H1 (cell line): ENCODE measurements at regions of chr2 and their contacts with region 1.

Region 1: DNA sequence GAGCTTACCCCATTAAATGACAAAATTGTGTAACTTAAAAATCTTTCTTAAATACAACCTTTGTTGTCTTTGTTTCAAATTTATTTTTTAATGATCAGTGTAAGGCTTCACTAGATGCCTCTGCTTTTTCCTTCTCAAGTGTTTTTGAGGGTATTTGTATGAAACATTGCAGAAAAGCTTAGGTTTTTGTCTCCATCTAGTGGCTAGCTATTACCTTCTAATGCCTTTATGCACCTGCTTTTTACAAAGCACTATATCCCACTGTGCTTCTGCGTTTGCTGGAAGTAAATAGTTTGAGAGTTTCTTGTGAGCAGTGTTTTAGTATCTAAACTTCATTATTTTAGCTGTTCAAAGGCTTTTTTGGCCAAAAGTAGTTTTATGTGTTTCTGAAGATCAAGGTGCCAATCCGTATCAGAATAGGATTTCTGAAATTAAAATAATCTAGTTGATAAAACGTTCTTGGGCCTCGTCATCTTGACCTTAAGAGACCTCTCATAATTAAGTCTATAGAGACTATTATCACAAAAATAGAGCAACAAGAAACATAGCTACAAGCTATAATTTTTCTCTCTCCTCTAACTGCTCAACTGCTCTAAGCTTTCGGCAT is 47.0 kb downstream of the IWS1 start:
- DNase-seq: no peak
- H3K4me3 ChIP-seq: no peak overlapping the region
- H3K27ac ChIP-seq: no peak overlapping the region
- H3K4me1 ChIP-seq: peaks cover 3 to 18% (median 7%) of the 10 kb centered on the region in 4 experiments; a peak in 6 of 7 replicates
- H3K27me3 ChIP-seq: no peaks in the 10 kb centered on the region
- CTCF ChIP-seq: peak in 2 of 3 experiments; percentile 58 to 71; a peak in 3 of 4 replicates
- EP300 ChIP-seq: no peak
- POLR2A ChIP-seq: no peak
- RAD21 ChIP-seq: peak; percentile 81 to 82

Region 2: GRCh38 chr2:127293748-127294562 is 185.4 kb before region 1 on chr2 and contains the start of gene ERCC3:
- CTCF ChIA-PET with region 1: interaction called, 10 read pairs
- POLR2A ChIA-PET with region 1: no interaction called
- DNase-seq: peak; percentile 53 to 88
- H3K4me3 ChIP-seq: peak within 1 kb of the TSS; percentile 57 to 87 (median 78)
- H3K27ac ChIP-seq: peak within 1 kb of the TSS; percentile 66
- H3K4me1 ChIP-seq: peaks cover 0 to 4% (median 4%) of the 10 kb centered on the region in 4 experiments; a peak in 4 of 7 replicates
- H3K27me3 ChIP-seq: no peaks in the 10 kb centered on the region
- CTCF ChIP-seq: no peak
- EP300 ChIP-seq: no peak
- POLR2A ChIP-seq: peak; percentile 80 to 89
- RAD21 ChIP-seq: no peak; a peak in 1 of 4 replicates
- total RNA-seq, gene ERCC3: 48.9 and 52.3 TPM in 2 replicates

Region 3: GRCh38 chr2:127415593-127416505 is 63.5 kb before region 1 on chr2:
- CTCF ChIA-PET with region 1: interaction called, 34 read pairs
- POLR2A ChIA-PET with region 1: interaction called, 7 read pairs
- DNase-seq: peak in 1 of 2 experiments; percentile 96
- H3K4me3 ChIP-seq: peak overlapping the region; percentile 13 to 58 (median 40); a peak in 7 of 8 replicates
- H3K27ac ChIP-seq: no peak overlapping the region
- H3K4me1 ChIP-seq: peaks cover 0 to 6% (median 0%) of the 10 kb centered on the region in 4 experiments; a peak in 2 of 7 replicates
- H3K27me3 ChIP-seq: peaks cover 1 to 33% (median 20%) of the 10 kb centered on the region in 4 experiments
- CTCF ChIP-seq: peak in 2 of 3 experiments; percentile 80 to 87; a peak in 3 of 4 replicates
- EP300 ChIP-seq: no peak
- POLR2A ChIP-seq: no peak
- RAD21 ChIP-seq: peak; percentile 72 to 76

Region 4: GRCh38 chr2:127437781-127438726 is 41.3 kb before region 1 on chr2:
- CTCF ChIA-PET with region 1: interaction called, 11 read pairs
- POLR2A ChIA-PET with region 1: interaction called, 4 read pairs
- DNase-seq: peak in 1 of 2 experiments; percentile 45
- H3K4me3 ChIP-seq: no peak overlapping the region
- H3K27ac ChIP-seq: no peak overlapping the region
- H3K4me1 ChIP-seq: no peaks in the 10 kb centered on the region
- H3K27me3 ChIP-seq: no peaks in the 10 kb centered on the region
- CTCF ChIP-seq: no peak
- EP300 ChIP-seq: no peak
- POLR2A ChIP-seq: no peak
- RAD21 ChIP-seq: peak; percentile 8 to 27; a peak in 1 of 4 replicates

Region 5: DNA sequence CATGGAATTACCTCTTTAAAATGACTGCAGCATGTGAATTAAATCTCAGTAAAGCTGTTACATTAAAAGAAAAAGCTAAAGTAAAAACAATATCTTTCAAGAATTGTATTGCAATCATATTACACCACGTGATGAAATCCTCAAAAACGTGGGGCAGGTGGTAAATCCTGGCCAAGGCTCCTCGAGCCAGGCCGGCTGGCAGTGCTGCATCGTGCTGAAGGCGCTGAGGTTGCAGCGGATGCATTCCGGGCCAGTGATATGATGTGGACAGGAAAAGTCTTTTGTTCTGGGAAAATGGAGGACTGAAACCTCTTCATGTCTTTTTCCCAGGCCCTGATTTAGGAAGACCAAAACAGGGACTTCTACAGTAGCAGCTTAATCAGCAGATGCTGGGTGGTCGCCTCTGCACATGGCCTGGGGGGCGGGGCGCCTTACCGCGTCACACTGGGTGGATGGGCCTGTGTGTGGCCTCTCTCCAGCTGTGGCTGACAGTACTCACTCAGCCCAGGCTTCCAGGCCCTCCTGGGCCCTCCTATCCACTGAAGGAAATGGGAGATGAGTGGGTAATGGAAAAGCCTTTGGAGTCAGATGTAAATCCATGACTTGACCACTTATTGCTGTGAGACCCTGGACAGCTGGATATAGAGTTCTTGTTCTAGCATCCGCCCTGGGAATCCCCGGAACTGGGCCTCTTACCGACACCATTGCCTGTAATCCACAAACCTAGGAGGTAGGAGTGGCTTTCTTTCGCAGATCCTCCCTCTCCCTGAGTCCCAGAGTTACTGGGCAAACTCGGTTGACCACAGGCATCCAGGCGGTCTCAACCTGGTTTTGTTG is 15.9 kb before region 1 on chr2:
- CTCF ChIA-PET with region 1: interaction called, 54 read pairs
- POLR2A ChIA-PET with region 1: interaction called, 4 read pairs
- DNase-seq: peak in 1 of 2 experiments; percentile 87
- H3K4me3 ChIP-seq: no peak overlapping the region
- H3K27ac ChIP-seq: peak overlapping the region; percentile 37; the same call in 1 of the 2 replicates
- H3K4me1 ChIP-seq: peaks cover 3 to 10% (median 5%) of the 10 kb centered on the region in 4 experiments; a peak in 5 of 7 replicates
- H3K27me3 ChIP-seq: no peaks in the 10 kb centered on the region
- CTCF ChIP-seq: no peak
- EP300 ChIP-seq: no peak
- POLR2A ChIP-seq: peak in 1 of 2 experiments; percentile 50; a peak in 1 of 3 replicates
- RAD21 ChIP-seq: no peak

Region 6: DNA sequence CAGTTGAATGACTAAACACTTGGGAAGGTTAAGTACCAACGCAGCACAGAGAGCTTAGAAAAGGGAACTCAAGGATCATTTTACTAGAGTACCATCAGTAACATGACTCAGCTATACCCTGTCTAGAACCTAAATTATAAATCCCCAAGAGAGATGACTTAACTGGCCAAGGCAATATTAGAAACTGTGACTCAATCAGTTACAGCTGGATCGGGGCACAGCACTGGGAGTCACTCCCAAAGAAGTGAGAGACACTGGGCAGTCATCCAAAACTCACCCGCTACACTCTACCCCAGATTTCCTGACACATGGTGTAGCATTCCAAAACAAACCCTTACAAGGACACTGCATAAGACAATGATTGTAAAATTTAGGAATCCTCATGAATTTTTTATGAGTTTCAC is 29.3 kb after region 1 on chr2:
- CTCF ChIA-PET with region 1: interaction called, 11 read pairs
- POLR2A ChIA-PET with region 1: interaction called, 5 read pairs
- DNase-seq: no peak
- H3K4me3 ChIP-seq: no peak overlapping the region
- H3K27ac ChIP-seq: no peak overlapping the region
- H3K4me1 ChIP-seq: no peaks in the 10 kb centered on the region; a peak in 1 of 7 replicates
- H3K27me3 ChIP-seq: no peaks in the 10 kb centered on the region
- CTCF ChIP-seq: no peak
- EP300 ChIP-seq: no peak
- POLR2A ChIP-seq: no peak
- RAD21 ChIP-seq: no peak

Region 7: GRCh38 chr2:127664065-127664894 is 185.0 kb after region 1 on chr2:
- CTCF ChIA-PET with region 1: no interaction called
- POLR2A ChIA-PET with region 1: no interaction called
- DNase-seq: no peak
- H3K4me3 ChIP-seq: peak overlapping the region; percentile 25 to 63 (median 45)
- H3K27ac ChIP-seq: no peak overlapping the region
- H3K4me1 ChIP-seq: peaks cover 0 to 3% (median 0%) of the 10 kb centered on the region in 4 experiments; a peak in 3 of 7 replicates
- H3K27me3 ChIP-seq: peaks cover 9 to 33% (median 25%) of the 10 kb centered on the region in 4 experiments
- CTCF ChIP-seq: no peak
- EP300 ChIP-seq: no peak
- POLR2A ChIP-seq: no peak
- RAD21 ChIP-seq: no peak